ENCODE measurements at regions of chr20 and their contacts with region 1.

Region 1: GRCh38 chr20:59087829-59088433 is 45.3 kb upstream of the PRELID3B start:
- DNase-seq: peak; percentile 81 to 89
- ATAC-seq: peak; percentile 70 to 87 (median 75)
- H3K4me3 ChIP-seq: no peak overlapping the region
- H3K27ac ChIP-seq: no peak overlapping the region
- H3K4me1 ChIP-seq: no peaks in the 10 kb centered on the region
- H3K27me3 ChIP-seq: peaks cover 0 to 5% (median 0%) of the 10 kb centered on the region in 3 donors
- CTCF ChIP-seq: peak; percentile 92

Region 2: DNA sequence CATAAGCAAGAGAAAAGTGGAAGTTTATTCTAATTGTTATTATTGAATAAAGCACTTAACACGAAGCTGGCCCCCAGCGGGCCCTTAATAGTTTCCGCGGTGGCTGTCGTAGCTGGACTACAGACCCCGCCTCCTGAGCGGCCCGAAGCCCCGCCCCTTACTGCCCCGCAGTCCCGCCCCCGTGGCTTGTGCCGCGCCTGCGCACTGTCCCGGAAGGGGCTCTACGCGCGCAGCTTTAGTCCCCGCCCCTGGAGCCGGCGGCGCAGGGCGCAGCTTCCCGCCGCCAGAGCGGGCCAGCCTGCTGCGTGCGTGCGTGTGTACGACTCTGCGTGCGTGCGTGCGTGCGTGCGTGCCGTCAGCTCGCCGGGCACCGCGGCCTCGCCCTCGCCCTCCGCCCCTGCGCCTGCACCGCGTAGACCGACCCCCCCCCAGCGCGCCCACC is 699.0 kb before region 1 on chr20 and contains the start of gene VAPB:
- intact Hi-C with region 1: no loop called
- DNase-seq: peak; percentile 95 to 98
- ATAC-seq: peak; percentile 99 to 100 (median 99)
- H3K4me3 ChIP-seq: peak within 1 kb of the TSS; percentile 90
- H3K27ac ChIP-seq: peak within 1 kb of the TSS; percentile 97
- H3K4me1 ChIP-seq: peaks cover 37% of the 10 kb centered on the region
- H3K27me3 ChIP-seq: no peaks in the 10 kb centered on the region
- CTCF ChIP-seq: no peak
- total RNA-seq, gene VAPB: 64.0 to 84.5 (median 77.5) TPM

Region 3: GRCh38 chr20:58746620-58747019 is 341.3 kb before region 1 on chr20:
- intact Hi-C with region 1: no loop called
- DNase-seq: no peak
- ATAC-seq: no peak
- H3K4me3 ChIP-seq: no peak overlapping the region
- H3K27ac ChIP-seq: no peak overlapping the region
- H3K4me1 ChIP-seq: no peaks in the 10 kb centered on the region
- H3K27me3 ChIP-seq: peaks cover 0 to 43% (median 11%) of the 10 kb centered on the region in 3 donors
- CTCF ChIP-seq: no peak

Region 4: DNA sequence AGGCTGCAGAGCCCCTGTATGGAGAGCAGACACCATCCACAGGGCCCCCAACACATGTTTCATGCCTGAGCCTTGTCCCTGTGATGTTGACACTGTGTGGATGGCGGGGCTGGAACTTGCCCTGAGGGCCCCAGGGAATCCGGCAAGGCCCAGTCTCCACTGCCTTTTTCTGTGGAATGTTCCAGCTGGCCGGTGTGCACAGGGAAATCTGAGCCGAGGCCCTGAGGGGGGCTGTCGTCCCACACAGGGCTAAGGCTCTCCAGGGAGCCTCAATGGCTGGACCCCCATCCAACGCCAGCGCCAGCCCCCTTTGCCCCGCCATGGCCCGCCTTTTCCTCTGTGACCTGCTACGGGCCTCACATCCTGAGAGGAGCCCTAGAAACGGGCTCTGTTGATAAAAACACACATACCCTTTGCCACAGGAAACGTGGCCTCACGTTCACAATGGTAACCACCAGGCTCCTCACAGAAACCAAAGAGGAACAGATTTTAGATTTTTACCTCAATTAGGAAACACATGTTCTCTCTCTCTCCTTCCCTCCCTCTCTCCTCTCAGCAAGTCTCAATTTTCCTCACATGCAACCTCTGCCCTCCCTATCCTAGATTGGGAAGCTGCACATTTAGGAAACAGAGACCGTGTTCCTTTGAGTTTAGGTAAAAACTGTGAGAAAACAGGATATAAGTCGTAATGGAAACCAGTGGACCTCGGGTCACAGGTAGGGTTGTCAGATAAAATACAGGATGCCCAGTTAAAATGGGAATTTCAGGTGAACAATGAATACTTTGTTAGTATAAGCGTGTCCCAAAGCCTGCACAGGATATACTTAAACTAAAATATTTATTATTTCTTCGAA is 61.9 kb after region 1 on chr20:
- intact Hi-C with region 1: no loop called
- DNase-seq: peak in 1 of 2 donors; percentile 27
- ATAC-seq: no peak
- H3K4me3 ChIP-seq: no peak overlapping the region
- H3K27ac ChIP-seq: no peak overlapping the region
- H3K4me1 ChIP-seq: peaks cover 25% of the 10 kb centered on the region
- H3K27me3 ChIP-seq: no peaks in the 10 kb centered on the region
- CTCF ChIP-seq: no peak

Region 5: DNA sequence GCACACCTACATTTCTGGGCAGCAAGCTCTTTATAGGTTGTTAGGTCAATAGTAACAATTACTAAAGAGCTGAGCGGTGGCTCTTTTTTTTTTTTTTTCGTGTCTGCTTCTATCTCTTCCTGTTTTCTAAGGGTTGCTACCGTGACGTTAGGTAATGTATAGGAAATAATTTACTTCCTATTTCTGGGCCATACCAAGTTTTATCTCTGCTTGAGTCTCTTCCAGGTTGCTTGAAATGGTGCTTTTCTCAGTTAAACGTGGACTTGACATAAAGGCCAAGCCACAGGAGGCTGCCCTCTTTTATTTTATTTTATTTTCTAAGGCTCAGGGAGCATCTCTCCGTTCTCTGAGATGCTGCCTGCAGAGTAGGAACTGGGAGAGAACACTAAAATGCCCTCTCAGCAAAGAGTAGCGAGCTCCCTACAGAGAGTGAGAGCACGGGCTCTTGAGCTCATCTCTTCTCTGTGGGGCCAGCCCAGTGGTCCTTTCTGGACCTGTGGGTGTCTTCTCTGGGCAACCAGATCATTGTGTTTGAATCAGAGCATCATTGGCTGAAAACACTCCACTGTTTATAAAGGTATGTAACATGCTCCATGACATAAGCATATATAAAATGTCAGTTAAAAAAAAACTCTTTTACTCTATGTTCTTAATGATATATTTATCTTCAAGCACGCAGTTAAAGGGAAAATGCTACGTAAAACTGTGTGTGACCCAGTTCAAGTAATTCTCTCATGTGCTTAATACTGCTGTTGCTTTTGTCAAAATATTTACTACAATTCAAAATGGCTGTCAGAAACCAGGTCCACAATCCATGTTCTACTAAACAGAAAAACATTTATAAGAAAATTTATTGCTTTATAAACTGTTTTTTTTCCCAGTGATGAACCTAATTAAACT is 76.0 kb after region 1 on chr20 and contains the start of gene ZNF831:
- intact Hi-C with region 1: no loop called
- DNase-seq: no peak
- ATAC-seq: no peak
- H3K4me3 ChIP-seq: no peak within 1 kb of the TSS
- H3K27ac ChIP-seq: no peak within 1 kb of the TSS
- H3K4me1 ChIP-seq: no peaks in the 10 kb centered on the region
- H3K27me3 ChIP-seq: peaks cover 0 to 5% (median 0%) of the 10 kb centered on the region in 3 donors
- CTCF ChIP-seq: no peak
- total RNA-seq, gene ZNF831: 0.02 to 0.08 (median 0.07) TPM in 3 of 4 donors, not detected in the other

Region 6: DNA sequence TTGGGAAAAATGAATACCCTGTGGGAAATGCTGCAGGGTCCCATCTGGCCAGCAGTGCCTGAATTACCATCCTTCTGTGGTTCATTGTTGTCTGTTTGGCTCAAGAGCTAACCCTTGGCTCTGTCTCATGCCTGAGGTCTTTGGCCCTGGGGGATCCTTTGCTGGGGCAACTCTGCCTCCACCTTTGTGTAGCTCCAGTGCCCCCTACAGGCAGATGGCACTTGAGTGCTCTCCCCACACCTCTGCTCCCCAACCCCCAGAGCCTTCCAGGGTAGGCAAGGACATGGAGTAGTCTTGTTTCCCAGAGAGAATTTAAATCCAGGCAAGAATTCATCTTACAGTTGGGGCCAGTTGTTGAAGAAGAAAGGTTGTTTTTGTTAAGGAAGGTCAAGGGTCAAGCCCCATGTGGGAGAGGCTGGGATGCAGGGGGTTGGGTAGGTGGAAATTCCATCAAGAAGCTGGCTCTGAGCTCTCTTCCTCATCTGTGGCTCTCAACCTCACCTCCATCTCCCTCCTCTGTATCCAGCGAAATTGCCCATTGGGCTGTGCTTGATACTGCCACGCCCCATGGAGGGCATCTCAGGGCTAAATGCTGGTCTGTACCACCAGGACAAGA is 119.9 kb after region 1 on chr20:
- intact Hi-C with region 1: loop called (anchors 5 kb)
- DNase-seq: peak in 1 of 2 donors; percentile 67
- ATAC-seq: peak; percentile 54 to 82 (median 80)
- H3K4me3 ChIP-seq: no peak overlapping the region
- H3K27ac ChIP-seq: no peak overlapping the region
- H3K4me1 ChIP-seq: no peaks in the 10 kb centered on the region
- H3K27me3 ChIP-seq: no peaks in the 10 kb centered on the region
- CTCF ChIP-seq: peak; percentile 58

Region 7: DNA sequence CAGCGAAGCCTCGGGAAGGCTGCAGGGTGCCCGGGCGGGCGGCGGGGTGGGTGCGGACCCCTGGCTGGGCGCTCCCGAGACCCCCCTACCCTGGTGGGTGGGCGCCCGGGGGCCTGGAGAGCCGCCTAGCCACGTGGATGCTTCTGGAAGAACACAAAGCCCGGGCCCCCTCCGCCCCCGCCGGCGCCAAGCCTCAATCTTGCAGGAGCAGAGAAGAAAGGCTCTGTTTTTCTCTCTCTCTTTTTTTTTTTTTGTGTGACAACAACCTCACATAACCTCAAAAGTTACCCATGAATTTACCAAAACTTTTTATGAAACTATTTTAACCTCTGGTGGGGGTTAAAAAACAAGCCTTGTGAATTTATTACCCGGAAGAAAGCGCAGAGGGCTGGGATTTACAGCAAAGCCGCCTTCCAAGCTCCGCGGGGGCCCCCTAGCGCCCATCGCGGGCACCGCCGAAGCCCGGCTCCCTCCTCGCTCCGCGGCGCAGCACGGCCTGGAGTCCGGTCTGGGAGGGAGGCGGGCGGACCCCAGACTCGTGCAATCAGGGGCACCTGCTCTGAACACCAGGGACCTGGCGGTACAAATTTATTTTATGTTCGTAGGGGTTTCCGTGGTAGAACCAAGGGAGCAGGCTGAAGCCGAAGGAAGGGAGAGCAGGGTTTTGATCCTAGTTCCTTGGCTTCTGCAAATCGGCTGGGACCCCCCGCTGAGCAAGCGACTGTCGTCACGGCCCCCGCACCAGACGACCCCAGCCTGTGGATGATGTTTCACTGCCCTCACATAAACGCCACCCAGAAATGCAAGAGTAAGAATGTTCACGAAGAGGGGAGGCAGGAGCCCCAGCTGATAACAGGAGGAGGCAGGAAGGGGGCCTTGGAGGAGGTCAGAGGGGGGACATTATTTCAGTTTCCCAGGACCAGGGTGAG is 134.6 kb after region 1 on chr20:
- intact Hi-C with region 1: loop called (anchors 1 to 5 kb)
- DNase-seq: peak; percentile 81 to 86
- ATAC-seq: peak; percentile 87 to 99 (median 94)
- H3K4me3 ChIP-seq: peak overlapping the region; percentile 75
- H3K27ac ChIP-seq: no peak overlapping the region
- H3K4me1 ChIP-seq: peaks cover 12% of the 10 kb centered on the region
- H3K27me3 ChIP-seq: peaks cover 0 to 28% (median 3%) of the 10 kb centered on the region in 3 donors
- CTCF ChIP-seq: peak; percentile 91

Region 8: DNA sequence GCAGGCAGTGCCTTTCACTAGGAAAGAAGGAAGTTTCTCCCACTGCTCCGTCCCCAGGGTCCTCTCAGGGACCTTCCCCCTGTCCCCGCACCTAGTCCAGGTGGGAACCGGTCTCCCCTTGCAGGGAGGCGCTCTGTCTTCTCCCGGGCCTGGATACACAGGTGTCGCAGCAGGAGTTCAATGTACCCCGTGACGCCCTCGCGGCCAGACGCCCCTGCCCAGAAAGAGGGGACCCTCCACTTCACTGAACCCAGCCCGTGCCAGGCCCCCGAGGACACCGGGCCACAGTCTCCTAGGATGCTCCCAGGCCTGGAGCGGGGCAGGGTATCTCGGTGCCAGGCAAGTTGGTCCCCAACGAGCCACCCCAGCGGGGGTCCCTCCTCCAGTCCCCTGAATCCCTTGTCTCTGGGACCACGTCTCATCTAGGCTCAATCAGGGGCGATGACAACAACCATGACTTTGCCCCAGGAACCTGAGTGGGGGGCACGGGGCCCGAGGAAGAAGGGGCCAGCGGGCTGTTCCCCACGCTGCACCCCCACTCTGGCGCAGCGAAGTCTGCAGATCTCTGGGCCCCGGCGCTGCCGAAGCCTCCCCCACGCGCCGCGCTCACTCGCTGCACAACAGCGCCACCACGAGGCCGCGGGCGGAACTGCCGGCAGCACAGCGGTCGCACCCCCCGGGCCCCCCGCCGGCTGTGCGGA is 315.5 kb after region 1 on chr20:
- intact Hi-C with region 1: loop called in 1 of 2 experiments (anchors 10 kb)
- DNase-seq: peak; percentile 45 to 69
- ATAC-seq: peak; percentile 50 to 75 (median 61)
- H3K4me3 ChIP-seq: peak overlapping the region; percentile 15
- H3K27ac ChIP-seq: no peak overlapping the region
- H3K4me1 ChIP-seq: no peaks in the 10 kb centered on the region
- H3K27me3 ChIP-seq: peaks cover 0 to 85% (median 25%) of the 10 kb centered on the region in 3 donors
- CTCF ChIP-seq: peak; percentile 83

Measured in psoas muscle (tissue), 8 donors.